Breast epithelium (tissue), 4 donors: ENCODE measurements at regions of chr9 and their contacts with region 1.

Region 1: GRCh38 chr9:71981944-71982343 is 70.5 kb downstream of the C9orf85 start:
- DNase-seq: no peak
- H3K4me3 ChIP-seq: no peak overlapping the region
- H3K27ac ChIP-seq: no peak overlapping the region
- H3K4me1 ChIP-seq: no peaks in the 10 kb centered on the region
- H3K27me3 ChIP-seq: no peaks in the 10 kb centered on the region
- CTCF ChIP-seq: no peak
- POLR2A ChIP-seq: no peak

Region 2: GRCh38 chr9:71058660-71059059 is 923.3 kb before region 1 on chr9:
- intact Hi-C with region 1: no loop called
- DNase-seq: no peak
- H3K4me3 ChIP-seq: no peak overlapping the region
- H3K27ac ChIP-seq: no peak overlapping the region
- H3K4me1 ChIP-seq: no peaks in the 10 kb centered on the region
- H3K27me3 ChIP-seq: no peaks in the 10 kb centered on the region
- CTCF ChIP-seq: no peak
- POLR2A ChIP-seq: no peak

Region 3: DNA sequence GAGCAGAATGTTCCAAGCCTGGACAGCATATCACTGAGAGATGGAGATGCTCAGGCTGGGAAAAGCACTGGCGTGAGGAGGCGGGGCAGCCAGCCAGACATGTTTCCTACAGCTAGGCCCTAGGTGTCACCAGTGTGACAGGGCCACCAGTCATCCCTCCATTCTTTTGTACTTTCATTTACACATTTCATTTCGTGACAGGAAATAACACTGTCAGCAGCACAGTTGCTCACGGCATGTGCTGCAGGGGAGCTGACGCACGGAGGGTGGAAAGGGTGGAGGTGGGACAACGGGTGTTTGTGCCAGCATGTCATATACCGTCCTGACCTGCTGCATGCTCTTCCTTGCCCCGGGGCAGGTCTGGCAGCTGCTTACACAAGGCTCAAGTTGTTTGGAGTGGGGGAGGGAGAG is 198.8 kb before region 1 on chr9:
- intact Hi-C with region 1: no loop called
- DNase-seq: peak in 1 of 2 donors; percentile 39
- H3K4me3 ChIP-seq: peak overlapping the region in 1 of 3 donors; percentile 30
- H3K27ac ChIP-seq: peak overlapping the region in 1 of 2 donors; percentile 19
- H3K4me1 ChIP-seq: no peaks in the 10 kb centered on the region
- H3K27me3 ChIP-seq: no peaks in the 10 kb centered on the region
- CTCF ChIP-seq: no peak
- POLR2A ChIP-seq: no peak

Region 4: DNA sequence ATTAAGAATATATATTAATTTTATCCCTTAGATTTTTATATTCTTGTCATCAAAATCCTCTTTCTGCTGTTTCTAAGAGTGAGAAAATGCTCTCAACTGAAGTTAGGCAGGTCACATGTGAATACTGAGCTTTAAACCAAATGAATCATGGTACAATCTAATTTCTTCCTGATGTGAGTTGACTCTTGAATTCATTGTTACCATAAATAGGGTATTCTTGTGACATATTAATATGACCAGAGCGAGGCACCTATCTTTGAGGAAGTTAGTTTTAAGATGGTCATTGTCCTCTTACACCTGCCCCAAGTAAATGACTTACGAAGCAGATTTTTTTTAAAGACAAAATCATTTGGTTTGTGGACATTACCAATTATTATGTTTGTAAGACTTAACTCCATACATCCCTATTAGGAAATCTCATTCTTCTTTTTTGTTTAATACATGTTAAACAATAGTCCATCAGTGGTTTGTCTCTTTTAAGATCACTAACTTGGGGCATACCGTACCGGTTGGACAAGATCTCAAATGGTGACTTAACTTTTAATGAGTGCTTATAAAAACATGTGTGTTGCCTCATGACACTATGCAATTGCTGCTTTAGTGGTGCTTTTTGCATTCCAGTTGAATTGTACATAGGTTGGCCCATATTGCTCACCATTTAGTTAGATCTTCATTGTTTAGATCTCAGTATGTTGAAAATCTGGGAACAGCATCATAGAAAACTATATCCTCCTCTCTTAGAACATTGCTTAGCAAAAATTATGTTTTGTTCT is 52.9 kb before region 1 on chr9:
- intact Hi-C with region 1: loop called (anchors 2 kb)
- DNase-seq: no peak
- H3K4me3 ChIP-seq: no peak overlapping the region
- H3K27ac ChIP-seq: peak overlapping the region in 1 of 2 donors; percentile 12
- H3K4me1 ChIP-seq: no peaks in the 10 kb centered on the region
- H3K27me3 ChIP-seq: no peaks in the 10 kb centered on the region
- CTCF ChIP-seq: no peak
- POLR2A ChIP-seq: no peak